ENCODE measurements at regions of chr14 and their contacts with region 1.

Region 1: DNA sequence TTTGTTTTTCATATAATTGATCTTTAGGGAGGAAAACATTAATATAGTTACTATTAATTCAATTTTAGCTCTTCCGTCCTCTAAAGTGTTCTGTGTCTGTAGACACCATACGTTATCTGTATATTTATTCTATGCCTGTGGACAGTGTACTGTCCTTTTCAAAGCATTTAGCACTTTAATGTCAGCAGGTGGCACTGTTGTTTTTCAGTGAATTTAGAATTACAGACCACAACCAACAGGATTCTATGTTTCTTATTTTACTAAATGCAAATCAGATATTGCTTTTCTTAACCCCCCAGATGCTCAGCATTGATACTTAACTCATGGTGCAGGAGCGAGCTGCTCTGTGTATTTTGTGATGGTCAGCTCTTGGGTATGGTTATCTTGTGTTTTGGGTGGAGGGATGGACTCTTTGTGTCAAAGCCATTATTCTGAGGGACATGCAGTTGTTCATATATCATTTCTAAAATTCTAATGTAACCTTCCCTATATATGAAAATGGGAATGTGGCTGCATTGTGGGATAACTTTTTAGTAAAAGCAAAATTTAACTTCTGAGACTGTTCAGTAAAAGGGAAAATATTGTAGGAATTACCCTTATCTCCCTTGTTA is 65.2 kb downstream of the PAPOLA start:
- DNase-seq: peak in 2 of 9 experiments; percentile 35 to 52
- ATAC-seq: no peak
- H3K4me3 ChIP-seq: no peak overlapping the region
- H3K4me3 Mint-ChIP-seq: no peak overlapping the region
- H3K27ac ChIP-seq: no peak overlapping the region
- H3K27ac Mint-ChIP-seq: no peak overlapping the region
- H3K4me1 ChIP-seq: no peaks in the 10 kb centered on the region
- H3K4me1 Mint-ChIP-seq: no peaks in the 10 kb centered on the region
- H3K27me3 ChIP-seq: no peaks in the 10 kb centered on the region
- H3K27me3 Mint-ChIP-seq: no peaks in the 10 kb centered on the region
- CTCF ChIP-seq: peak; percentile 49

Region 2: GRCh38 chr14:96525452-96525851 is 41.9 kb before region 1 on chr14:
- CTCF ChIA-PET with region 1: no interaction called
- POLR2A ChIA-PET with region 1: no interaction called
- intact Hi-C with region 1: loop called in 1 of 2 experiments (anchors 5 kb)
- DNase-seq: no peak
- ATAC-seq: no peak
- H3K4me3 ChIP-seq: no peak overlapping the region
- H3K4me3 Mint-ChIP-seq: no peak overlapping the region
- H3K27ac ChIP-seq: no peak overlapping the region
- H3K27ac Mint-ChIP-seq: no peak overlapping the region
- H3K4me1 ChIP-seq: no peaks in the 10 kb centered on the region
- H3K4me1 Mint-ChIP-seq: peaks cover 4% of the 10 kb centered on the region
- H3K27me3 ChIP-seq: no peaks in the 10 kb centered on the region
- H3K27me3 Mint-ChIP-seq: no peaks in the 10 kb centered on the region
- CTCF ChIP-seq: no peak

Region 3: GRCh38 chr14:96536807-96537206 is 30.6 kb before region 1 on chr14:
- CTCF ChIA-PET with region 1: no interaction called
- POLR2A ChIA-PET with region 1: no interaction called
- intact Hi-C with region 1: no loop called
- DNase-seq: no peak
- ATAC-seq: no peak
- H3K4me3 ChIP-seq: no peak overlapping the region
- H3K4me3 Mint-ChIP-seq: no peak overlapping the region
- H3K27ac ChIP-seq: no peak overlapping the region
- H3K27ac Mint-ChIP-seq: no peak overlapping the region
- H3K4me1 ChIP-seq: no peaks in the 10 kb centered on the region
- H3K4me1 Mint-ChIP-seq: no peaks in the 10 kb centered on the region
- H3K27me3 ChIP-seq: no peaks in the 10 kb centered on the region
- H3K27me3 Mint-ChIP-seq: no peaks in the 10 kb centered on the region
- CTCF ChIP-seq: no peak

Region 4: GRCh38 chr14:96741151-96741977 is 174.0 kb after region 1 on chr14:
- CTCF ChIA-PET with region 1: interaction called, 23 read pairs
- POLR2A ChIA-PET with region 1: no interaction called
- intact Hi-C with region 1: loop called (anchors 2 kb)
- DNase-seq: peak; percentile 56 to 89 (median 74)
- ATAC-seq: peak; percentile 97
- H3K4me3 ChIP-seq: peak overlapping the region; percentile 40 to 53
- H3K4me3 Mint-ChIP-seq: peak overlapping the region; percentile 77
- H3K27ac ChIP-seq: no peak overlapping the region
- H3K27ac Mint-ChIP-seq: no peak overlapping the region
- H3K4me1 ChIP-seq: peaks cover 6% of the 10 kb centered on the region
- H3K4me1 Mint-ChIP-seq: peaks cover 11% of the 10 kb centered on the region
- H3K27me3 ChIP-seq: peaks cover 16 to 24% of the 10 kb centered on the region in 2 experiments
- H3K27me3 Mint-ChIP-seq: peaks cover 73% of the 10 kb centered on the region
- CTCF ChIP-seq: peak; percentile 91